OCI-LY7 (cell line): ENCODE measurements at regions of chr12 and their contacts with region 1.

Region 1: DNA sequence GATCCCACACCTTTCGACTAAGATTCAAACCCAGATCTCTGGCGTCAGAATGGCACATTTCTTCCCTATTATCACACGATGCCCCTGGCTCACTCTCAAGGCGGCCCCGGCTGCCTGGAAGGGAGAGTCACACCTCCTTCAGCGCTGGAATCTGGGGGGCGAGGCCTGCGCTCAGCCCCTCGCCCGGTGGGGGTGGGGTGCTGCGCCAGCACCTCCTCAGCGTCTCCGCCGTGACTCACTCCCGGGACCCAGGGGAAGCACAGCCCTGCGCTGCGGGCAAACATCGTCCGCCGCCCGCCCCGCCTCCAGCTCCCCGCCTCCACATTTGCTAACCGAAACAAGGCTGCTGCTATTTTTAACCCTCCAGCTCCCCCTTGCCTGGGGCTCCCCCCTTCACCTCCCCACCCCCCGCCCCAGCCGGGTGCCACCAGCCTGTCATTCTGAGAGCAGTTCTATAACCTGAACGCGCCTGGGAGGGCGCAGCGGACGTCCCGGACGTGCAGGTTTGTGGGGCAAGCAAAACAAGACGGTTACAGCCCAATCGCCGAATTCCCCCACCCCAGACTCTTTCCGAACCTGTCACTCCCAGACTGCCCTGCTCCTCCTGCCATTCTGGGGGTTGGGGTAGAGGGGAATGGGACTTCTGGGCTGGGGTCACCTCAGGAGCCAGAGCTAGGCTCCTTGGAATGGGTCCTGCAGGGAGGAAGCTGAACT is 6.7 kb downstream of the HDAC7 start:
- DNase-seq: peak; percentile 96
- H3K4me3 ChIP-seq: peak overlapping the region; percentile 66
- H3K27ac ChIP-seq: peak overlapping the region; percentile 96
- H3K4me1 ChIP-seq: peaks cover 98% of the 10 kb centered on the region
- CTCF ChIP-seq: peak; percentile 36; the same call in 1 of the 2 replicates

Region 2: GRCh38 chr12:47621960-47622359 is 191.0 kb before region 1 on chr12:
- CTCF ChIA-PET with region 1: no interaction called
- POLR2A ChIA-PET with region 1: no interaction called
- intact Hi-C with region 1: no loop called
- DNase-seq: no peak
- H3K4me3 ChIP-seq: no peak overlapping the region
- H3K27ac ChIP-seq: no peak overlapping the region
- H3K4me1 ChIP-seq: no peaks in the 10 kb centered on the region
- CTCF ChIP-seq: no peak

Region 3: DNA sequence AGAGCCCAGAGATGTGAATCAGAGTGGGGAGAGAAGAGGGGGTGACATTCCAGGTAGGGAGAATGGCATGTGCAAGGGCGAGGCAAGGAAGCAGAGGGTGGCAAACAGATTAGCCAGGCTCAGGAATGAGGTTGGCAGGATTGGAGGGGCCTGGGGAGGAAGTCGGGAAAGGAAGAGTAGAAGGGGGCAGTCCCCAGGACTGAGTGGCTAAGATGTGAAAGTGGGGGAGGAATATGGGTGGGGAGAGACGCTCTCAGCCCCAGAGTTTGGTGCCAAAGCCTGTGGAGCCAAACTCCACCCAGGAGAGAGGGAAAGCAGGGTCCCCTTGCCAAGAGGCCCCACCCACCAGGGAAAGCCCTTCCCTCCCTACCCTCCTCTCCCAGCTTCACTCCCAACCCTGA is 12.3 kb after region 1 on chr12:
- CTCF ChIA-PET with region 1: interaction called, 133 read pairs
- POLR2A ChIA-PET with region 1: interaction called, 342 read pairs
- intact Hi-C with region 1: no loop called
- DNase-seq: no peak
- H3K4me3 ChIP-seq: no peak overlapping the region
- H3K27ac ChIP-seq: no peak overlapping the region
- H3K4me1 ChIP-seq: peaks cover 75% of the 10 kb centered on the region
- CTCF ChIP-seq: no peak

Region 4: GRCh38 chr12:47882781-47883546 is 70.0 kb after region 1 on chr12:
- CTCF ChIA-PET with region 1: no interaction called
- POLR2A ChIA-PET with region 1: no interaction called
- intact Hi-C with region 1: loop called (anchors 2 kb)
- DNase-seq: peak; percentile 91
- H3K4me3 ChIP-seq: peak overlapping the region; percentile 46
- H3K27ac ChIP-seq: peak overlapping the region; percentile 73
- H3K4me1 ChIP-seq: peaks cover 68% of the 10 kb centered on the region
- CTCF ChIP-seq: no peak

Region 5: GRCh38 chr12:48105862-48106680 is 293.1 kb after region 1 on chr12 and contains the start of gene SENP1:
- CTCF ChIA-PET with region 1: no interaction called
- POLR2A ChIA-PET with region 1: no interaction called
- intact Hi-C with region 1: loop called (anchors 5 kb)
- DNase-seq: peak; percentile 92
- H3K4me3 ChIP-seq: peak within 1 kb of the TSS; percentile 96
- H3K27ac ChIP-seq: peak within 1 kb of the TSS; percentile 94
- H3K4me1 ChIP-seq: peaks cover 40% of the 10 kb centered on the region
- CTCF ChIP-seq: no peak; the same call in 1 of the 2 replicates
- total RNA-seq, gene SENP1: 29.9 and 48.3 TPM in 2 replicates